Lower leg skin (tissue), 4 donors: ENCODE measurements at regions of chr1 and their contacts with region 1.

Region 1: GRCh38 chr1:151491641-151492040 is 19.5 kb upstream of the CGN start:
- DNase-seq: no peak
- H3K4me3 ChIP-seq: no peak overlapping the region
- CTCF ChIP-seq: no peak
- POLR2A ChIP-seq: no peak

Region 2: DNA sequence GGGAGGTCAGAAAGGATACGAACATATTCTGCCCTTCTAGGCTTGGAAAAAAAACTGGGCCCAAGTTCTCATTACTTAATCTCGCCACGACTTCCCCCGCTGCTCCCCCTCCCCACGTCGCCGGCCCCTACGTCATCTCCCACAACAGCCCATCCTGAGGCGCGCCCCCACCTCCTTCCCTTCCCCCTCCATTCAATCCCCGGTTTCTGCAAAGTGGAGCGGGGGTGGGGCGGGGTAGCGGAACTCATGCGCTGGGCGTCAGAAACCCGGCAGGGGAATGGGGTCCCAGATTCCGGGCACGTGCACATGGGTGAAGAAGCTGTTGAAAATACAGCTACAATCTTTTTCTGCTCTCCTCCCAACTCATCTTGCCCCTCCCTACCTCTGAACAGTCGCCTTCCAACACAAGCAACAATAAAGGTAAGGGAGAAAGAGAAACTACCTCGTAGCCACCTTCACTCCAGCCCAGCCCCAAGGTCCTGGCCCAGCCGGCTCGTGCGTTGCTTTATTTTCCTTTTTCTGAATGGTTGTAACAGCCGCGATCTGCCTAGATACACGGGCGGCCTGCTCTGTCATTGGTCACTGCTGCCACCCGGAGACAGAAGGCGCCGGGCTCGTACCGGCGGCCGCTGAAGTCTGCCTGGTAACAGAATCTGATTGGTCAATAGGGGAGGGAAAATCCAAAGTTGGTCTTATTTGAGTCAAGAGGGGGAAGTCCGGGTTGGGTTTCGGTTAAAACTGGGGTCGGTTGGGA is 144.7 kb before region 1 on chr1 and contains the start of gene RFX5:
- intact Hi-C with region 1: loop called (anchors 2 kb)
- DNase-seq: peak; percentile 96 to 98
- H3K4me3 ChIP-seq: peak within 1 kb of the TSS; percentile 51
- CTCF ChIP-seq: no peak
- POLR2A ChIP-seq: no peak
- total RNA-seq, gene RFX5: 13.2 to 23.2 (median 16.7) TPM

Region 3: GRCh38 chr1:151790071-151790940 is 298.7 kb after region 1 on chr1 and contains the start of gene TDRKH:
- intact Hi-C with region 1: no loop called
- DNase-seq: peak; percentile 97 to 100
- H3K4me3 ChIP-seq: peak within 1 kb of the TSS; percentile 48
- CTCF ChIP-seq: peak in 1 of 3 donors; percentile 70
- POLR2A ChIP-seq: no peak
- total RNA-seq, gene TDRKH: 2.1 to 3.0 (median 2.6) TPM